Activated naive CD4-positive, alpha-beta T cell treated with anti-CD3 and anti-CD28 coated beads for 36 hours (primary cell): ENCODE measurements at regions of chr9 and their contacts with region 1.

Region 1: DNA sequence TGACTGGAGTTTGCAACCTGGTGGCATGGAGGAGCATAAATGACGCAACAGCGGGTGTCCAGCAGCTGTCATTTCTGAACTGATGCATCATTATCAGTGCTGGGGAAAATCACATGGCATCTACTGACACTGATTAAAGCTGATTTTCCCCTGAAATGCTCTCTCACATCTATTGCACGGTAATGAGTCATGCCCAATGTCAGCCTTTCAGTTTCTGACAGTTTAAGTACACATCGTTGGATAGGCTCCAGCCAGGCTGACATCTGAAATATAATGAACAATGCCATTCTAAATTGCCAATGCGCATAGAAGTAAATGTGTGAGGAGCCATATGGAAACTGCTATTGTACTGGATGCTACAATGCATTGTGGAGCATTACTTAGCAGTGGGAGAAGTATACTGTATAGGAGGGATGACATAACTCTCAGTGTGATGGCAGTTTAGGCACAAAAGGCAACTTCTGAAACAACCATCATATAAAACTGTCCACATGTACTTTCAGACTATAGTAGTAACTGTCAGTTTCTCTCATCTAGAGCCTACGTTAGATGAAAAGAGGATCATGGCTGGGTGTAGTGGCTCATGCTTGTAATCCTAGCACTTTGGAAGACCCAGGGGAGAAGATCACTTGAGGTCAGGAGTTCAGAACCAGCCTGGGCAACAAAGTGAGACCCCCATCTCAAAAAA is 389.3 kb upstream of the DMAC1 start:
- DNase-seq: peak; percentile 42
- H3K4me3 Mint-ChIP-seq: no peak overlapping the region
- H3K27ac Mint-ChIP-seq: no peak overlapping the region
- H3K4me1 Mint-ChIP-seq: peaks cover 18% of the 10 kb centered on the region
- H3K27me3 Mint-ChIP-seq: peaks cover 15% of the 10 kb centered on the region

Region 2: DNA sequence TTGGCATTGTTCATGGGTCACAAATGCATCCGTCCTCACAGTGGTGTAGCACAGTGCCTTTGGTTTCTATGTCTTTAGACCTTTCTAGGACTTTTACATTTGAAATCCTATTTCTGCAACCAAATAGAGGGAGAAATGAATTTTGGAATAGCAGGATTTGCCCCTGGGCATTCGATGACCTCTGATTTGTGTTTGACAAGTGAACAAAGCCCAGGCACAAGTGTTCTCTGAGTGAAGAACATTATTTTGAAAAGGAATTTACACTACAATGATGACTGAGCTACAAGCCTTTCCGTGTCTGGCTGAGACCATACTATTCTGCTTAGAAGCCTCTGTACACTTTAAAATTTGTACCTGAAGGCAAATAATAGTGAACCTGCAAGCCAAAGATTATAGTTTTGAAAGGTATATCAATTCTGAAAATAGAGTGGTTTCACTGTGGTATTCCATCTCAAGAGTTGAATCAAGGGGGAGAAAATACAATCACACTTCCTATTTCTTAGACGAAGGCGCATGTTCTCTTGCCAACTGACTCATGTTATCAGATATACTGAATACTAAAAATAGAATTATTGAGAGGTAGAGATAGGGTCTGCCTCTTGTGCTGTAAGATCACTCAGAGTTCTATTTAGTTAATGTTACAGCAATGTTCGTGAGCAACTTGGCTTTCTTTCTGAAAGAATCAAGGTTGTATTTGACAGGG is 1133.5 kb before region 1 on chr9:
- CTCF ChIA-PET with region 1: no interaction called
- intact Hi-C with region 1: no loop called
- DNase-seq: no peak
- H3K4me3 Mint-ChIP-seq: no peak overlapping the region
- H3K27ac Mint-ChIP-seq: no peak overlapping the region
- H3K4me1 Mint-ChIP-seq: peaks cover 8% of the 10 kb centered on the region
- H3K27me3 Mint-ChIP-seq: no peaks in the 10 kb centered on the region

Region 3: GRCh38 chr9:7756088-7756487 is 432.8 kb before region 1 on chr9:
- CTCF ChIA-PET with region 1: no interaction called
- intact Hi-C with region 1: loop called (anchors 10 kb)
- DNase-seq: peak; percentile 46
- H3K4me3 Mint-ChIP-seq: no peak overlapping the region
- H3K27ac Mint-ChIP-seq: peak overlapping the region; percentile 72
- H3K4me1 Mint-ChIP-seq: peaks cover 24% of the 10 kb centered on the region
- H3K27me3 Mint-ChIP-seq: no peaks in the 10 kb centered on the region

Region 4: GRCh38 chr9:7844242-7844641 is 344.6 kb before region 1 on chr9:
- CTCF ChIA-PET with region 1: no interaction called
- intact Hi-C with region 1: loop called (anchors 10 kb)
- DNase-seq: no peak
- H3K4me3 Mint-ChIP-seq: no peak overlapping the region
- H3K27ac Mint-ChIP-seq: no peak overlapping the region
- H3K4me1 Mint-ChIP-seq: no peaks in the 10 kb centered on the region
- H3K27me3 Mint-ChIP-seq: no peaks in the 10 kb centered on the region

Region 5: DNA sequence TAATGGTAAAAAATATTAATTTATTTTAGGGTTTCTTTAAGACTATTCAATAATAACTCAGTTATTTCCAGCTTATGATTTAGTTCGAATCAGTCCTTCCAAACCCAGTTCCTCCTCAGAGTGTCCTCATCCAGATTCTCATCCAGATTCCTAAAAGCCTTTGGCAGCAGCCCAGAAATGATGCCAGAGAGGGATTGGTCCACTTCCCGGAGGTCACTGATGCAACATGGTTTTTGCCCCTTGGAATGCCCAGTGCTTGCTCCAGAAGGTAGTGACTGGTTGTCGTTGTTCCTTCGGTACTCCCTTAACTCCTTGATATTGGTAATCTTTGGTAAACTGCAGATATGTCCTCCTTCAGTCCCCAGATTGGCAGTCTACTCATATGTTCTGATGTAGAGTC is 103.8 kb after region 1 on chr9:
- CTCF ChIA-PET with region 1: no interaction called
- intact Hi-C with region 1: no loop called
- DNase-seq: no peak
- H3K4me3 Mint-ChIP-seq: no peak overlapping the region
- H3K27ac Mint-ChIP-seq: no peak overlapping the region
- H3K4me1 Mint-ChIP-seq: no peaks in the 10 kb centered on the region
- H3K27me3 Mint-ChIP-seq: no peaks in the 10 kb centered on the region

Region 6: DNA sequence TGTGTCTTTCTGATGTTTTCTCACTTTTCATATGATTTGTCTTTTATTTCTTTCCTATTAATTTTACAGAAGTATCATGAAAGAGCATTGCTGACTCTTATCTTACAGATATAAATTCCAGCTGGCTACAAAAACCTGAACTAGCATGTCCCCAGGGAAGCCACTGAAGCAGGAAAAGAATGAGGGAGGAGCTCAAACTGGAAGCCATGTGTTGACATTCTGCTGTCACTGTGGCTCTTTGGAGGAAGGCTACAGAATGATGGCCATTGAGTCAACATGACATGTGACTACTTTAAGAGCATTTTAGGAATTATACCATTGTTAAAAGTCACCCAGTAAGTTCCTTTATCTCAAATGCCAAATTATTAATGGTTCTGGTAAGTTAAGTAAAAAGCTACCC is 249.0 kb after region 1 on chr9:
- CTCF ChIA-PET with region 1: no interaction called
- intact Hi-C with region 1: loop called (anchors 10 kb)
- DNase-seq: no peak
- H3K4me3 Mint-ChIP-seq: no peak overlapping the region
- H3K27ac Mint-ChIP-seq: no peak overlapping the region
- H3K4me1 Mint-ChIP-seq: peaks cover 5% of the 10 kb centered on the region
- H3K27me3 Mint-ChIP-seq: peaks cover 9% of the 10 kb centered on the region